ENCODE measurements at regions of chr2 and their contacts with region 1.

Region 1: DNA sequence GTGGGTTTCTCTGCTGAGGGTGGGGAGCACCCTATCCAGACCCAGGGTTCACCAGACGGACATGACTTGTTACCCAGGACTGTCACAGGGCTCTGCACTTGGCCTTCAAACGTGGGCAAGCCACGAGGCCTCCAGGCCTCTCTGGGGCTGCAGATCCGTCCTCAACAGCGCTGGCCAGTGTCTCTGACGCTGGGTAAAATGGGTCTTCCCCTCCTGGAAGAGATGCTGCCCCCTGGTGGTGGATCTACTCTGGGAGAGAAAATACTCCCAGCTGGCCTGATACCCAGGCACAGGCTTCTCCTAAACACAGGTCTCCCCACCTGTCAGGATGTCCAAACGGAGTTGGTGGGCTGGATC is 3.7 kb downstream of the GPR17 start:
- DNase-seq: peak; percentile 87
- ATAC-seq: peak; percentile 86
- H3K4me3 Mint-ChIP-seq: no peak overlapping the region
- H3K27ac Mint-ChIP-seq: no peak overlapping the region
- H3K4me1 Mint-ChIP-seq: peaks cover 7% of the 10 kb centered on the region
- H3K27me3 Mint-ChIP-seq: no peaks in the 10 kb centered on the region

Region 2: GRCh38 chr2:127197475-127198385 is 451.9 kb before region 1 on chr2:
- CTCF ChIA-PET with region 1: interaction called, 10 read pairs
- DNase-seq: peak; percentile 73
- ATAC-seq: peak; percentile 91
- H3K4me3 Mint-ChIP-seq: peak overlapping the region; percentile 60
- H3K27ac Mint-ChIP-seq: no peak overlapping the region
- H3K4me1 Mint-ChIP-seq: no peaks in the 10 kb centered on the region
- H3K27me3 Mint-ChIP-seq: peaks cover 4% of the 10 kb centered on the region

Region 3: DNA sequence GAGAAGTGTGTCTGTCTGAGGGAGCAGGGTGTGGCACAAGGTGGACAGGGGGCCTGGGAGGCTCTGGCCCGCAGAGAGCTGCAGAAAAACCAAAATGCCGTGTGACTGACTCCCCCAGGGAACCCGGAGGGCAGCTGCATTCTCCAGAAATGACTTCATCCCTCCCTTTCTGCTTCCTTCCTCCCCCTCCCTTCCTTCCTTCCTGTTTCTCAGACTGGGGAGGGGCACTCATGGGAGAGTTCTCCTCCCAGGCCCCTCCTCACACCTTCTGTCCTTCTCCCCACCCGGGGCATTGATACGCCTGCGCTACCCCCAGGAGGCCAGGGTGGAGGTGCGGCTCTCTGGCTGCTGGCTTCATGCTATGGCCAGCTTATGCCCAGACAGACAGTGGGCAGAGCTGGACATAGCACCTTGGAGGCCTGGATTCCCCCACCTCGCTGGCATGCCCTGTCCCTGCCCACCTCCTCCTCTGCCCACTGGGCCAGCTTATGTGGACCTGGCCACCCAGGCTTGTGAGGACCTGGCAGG is 11.9 kb before region 1 on chr2:
- CTCF ChIA-PET with region 1: interaction called, 21 read pairs
- DNase-seq: no peak
- ATAC-seq: no peak
- H3K4me3 Mint-ChIP-seq: no peak overlapping the region
- H3K27ac Mint-ChIP-seq: peak overlapping the region; percentile 59
- H3K4me1 Mint-ChIP-seq: peaks cover 21% of the 10 kb centered on the region
- H3K27me3 Mint-ChIP-seq: no peaks in the 10 kb centered on the region